Panc1 (cell line): ENCODE measurements at regions of chr15 and their contacts with region 1.

Region 1: DNA sequence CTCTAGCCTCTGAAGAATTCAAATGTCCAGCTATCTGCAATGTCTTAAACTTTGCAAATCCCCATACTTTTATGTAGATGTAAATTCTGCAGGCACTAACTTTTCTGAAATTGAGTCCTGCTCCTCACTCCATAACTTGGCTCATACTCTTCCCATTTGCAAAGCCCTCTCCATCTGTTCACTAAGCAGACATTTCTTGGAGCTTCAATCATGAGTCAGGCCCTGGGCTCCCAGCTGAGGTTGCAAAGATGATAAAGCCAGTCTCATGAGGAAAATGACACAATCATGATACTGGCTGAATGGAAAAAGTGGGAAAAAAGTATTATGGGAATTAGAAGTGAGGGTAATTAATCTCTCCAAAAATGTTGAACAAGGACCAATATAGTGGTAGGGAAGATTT is 507.6 kb downstream of the NR2F2 start:
- DNase-seq: no peak
- ATAC-seq: no peak
- H3K4me3 ChIP-seq: no peak overlapping the region
- H3K27ac ChIP-seq: no peak overlapping the region
- H3K4me1 ChIP-seq: no peaks in the 10 kb centered on the region
- H3K27me3 ChIP-seq: no peaks in the 10 kb centered on the region
- CTCF ChIP-seq: no peak

Region 2: DNA sequence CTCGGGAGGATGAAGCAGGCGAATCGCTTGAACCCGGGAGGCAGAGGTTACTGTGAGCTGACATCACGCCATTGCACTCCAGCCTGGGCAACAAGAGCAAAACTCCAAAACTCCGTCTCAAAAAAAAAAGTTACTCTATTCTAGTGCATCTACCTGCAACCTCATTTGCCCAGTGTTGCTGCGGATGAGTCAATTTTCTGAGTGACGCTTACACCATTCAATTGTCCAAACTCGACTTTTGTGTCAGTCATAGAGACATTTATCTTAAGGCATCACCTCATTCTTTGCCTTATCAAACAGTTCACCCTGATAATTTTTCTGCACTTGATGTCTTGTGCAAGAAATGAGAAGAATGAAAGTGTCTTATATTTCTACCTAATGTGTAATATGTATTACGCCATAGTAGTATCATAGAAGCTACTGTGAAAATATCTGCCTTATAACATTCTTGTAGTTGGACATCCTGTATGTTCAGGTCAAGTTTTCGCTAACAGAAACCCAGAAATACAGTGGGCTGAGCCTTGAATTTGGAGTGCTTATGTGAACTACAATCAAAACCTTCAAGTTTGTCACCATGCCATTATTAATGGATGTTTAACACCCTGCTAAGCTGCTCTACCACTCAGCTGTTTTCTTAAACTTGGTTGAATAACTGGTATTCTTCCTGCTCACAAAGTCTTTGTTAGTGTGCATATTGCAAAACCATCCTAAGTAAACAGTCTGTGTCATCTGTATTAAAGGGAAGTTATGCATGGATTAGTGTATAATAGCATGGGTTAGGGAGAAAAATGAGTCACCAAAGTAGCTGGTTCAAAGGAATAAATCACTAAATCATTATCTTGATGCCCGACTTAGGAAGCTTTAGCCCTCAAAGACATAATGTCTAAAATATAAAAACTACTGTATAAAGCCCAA is 1038.5 kb before region 1 on chr15:
- CTCF ChIA-PET with region 1: interaction called, 10 read pairs
- POLR2A ChIA-PET with region 1: no interaction called
- in situ Hi-C with region 1: no loop called
- intact Hi-C with region 1: no loop called
- DNase-seq: peak; percentile 38
- ATAC-seq: no peak
- H3K4me3 ChIP-seq: no peak overlapping the region
- H3K27ac ChIP-seq: no peak overlapping the region
- H3K4me1 ChIP-seq: no peaks in the 10 kb centered on the region
- H3K27me3 ChIP-seq: no peaks in the 10 kb centered on the region
- CTCF ChIP-seq: no peak